ENCODE measurements at regions of chr18 and their contacts with region 1.

Region 1: GRCh38 chr18:4106407-4107033 is 348.6 kb downstream of the DLGAP1 start:
- DNase-seq: no peak
- ATAC-seq: peak; percentile 70
- H3K4me3 ChIP-seq: no peak overlapping the region
- H3K27ac ChIP-seq: no peak overlapping the region
- H3K4me1 ChIP-seq: no peaks in the 10 kb centered on the region
- H3K27me3 ChIP-seq: no peaks in the 10 kb centered on the region
- CTCF ChIP-seq: peak; percentile 53 to 79 (median 73); a peak in 5 of 6 replicates
- EP300 ChIP-seq: no peak
- POLR2A ChIP-seq: no peak
- RAD21 ChIP-seq: peak; percentile 69

Region 2: GRCh38 chr18:4024702-4025101 is 81.8 kb before region 1 on chr18:
- CTCF ChIA-PET with region 1: no interaction called
- POLR2A ChIA-PET with region 1: no interaction called
- RAD21 ChIA-PET with region 1: no interaction called
- SMC1A ChIA-PET with region 1: no interaction called
- in situ Hi-C with region 1: no loop called
- intact Hi-C with region 1: no loop called
- DNase-seq: no peak
- ATAC-seq: peak; percentile 36; the same call in 1 of the 3 replicates
- H3K4me3 ChIP-seq: no peak overlapping the region
- H3K27ac ChIP-seq: no peak overlapping the region
- H3K4me1 ChIP-seq: no peaks in the 10 kb centered on the region
- H3K27me3 ChIP-seq: no peaks in the 10 kb centered on the region
- CTCF ChIP-seq: no peak
- EP300 ChIP-seq: no peak
- POLR2A ChIP-seq: no peak
- RAD21 ChIP-seq: no peak

Region 3: GRCh38 chr18:4096486-4096885 is 10.0 kb before region 1 on chr18:
- CTCF ChIA-PET with region 1: interaction called, 16 read pairs
- POLR2A ChIA-PET with region 1: interaction called, 10 read pairs
- RAD21 ChIA-PET with region 1: interaction called, 3 read pairs
- SMC1A ChIA-PET with region 1: interaction called, 7 read pairs
- in situ Hi-C with region 1: no loop called
- intact Hi-C with region 1: no loop called
- DNase-seq: no peak
- ATAC-seq: no peak
- H3K4me3 ChIP-seq: no peak overlapping the region
- H3K27ac ChIP-seq: no peak overlapping the region
- H3K4me1 ChIP-seq: no peaks in the 10 kb centered on the region
- H3K27me3 ChIP-seq: no peaks in the 10 kb centered on the region
- CTCF ChIP-seq: no peak
- EP300 ChIP-seq: no peak
- POLR2A ChIP-seq: no peak
- RAD21 ChIP-seq: no peak

Region 4: GRCh38 chr18:4125232-4126230 is 19.0 kb after region 1 on chr18:
- CTCF ChIA-PET with region 1: interaction called, 45 read pairs
- POLR2A ChIA-PET with region 1: interaction called, 4 read pairs
- RAD21 ChIA-PET with region 1: interaction called, 15 read pairs
- SMC1A ChIA-PET with region 1: interaction called, 23 read pairs
- in situ Hi-C with region 1: no loop called
- intact Hi-C with region 1: no loop called
- DNase-seq: no peak
- ATAC-seq: peak; percentile 27
- H3K4me3 ChIP-seq: no peak overlapping the region
- H3K27ac ChIP-seq: no peak overlapping the region
- H3K4me1 ChIP-seq: no peaks in the 10 kb centered on the region
- H3K27me3 ChIP-seq: no peaks in the 10 kb centered on the region
- CTCF ChIP-seq: no peak
- EP300 ChIP-seq: no peak
- POLR2A ChIP-seq: no peak
- RAD21 ChIP-seq: no peak

Region 5: GRCh38 chr18:4236940-4237663 is 130.6 kb after region 1 on chr18:
- CTCF ChIA-PET with region 1: interaction called, 7 read pairs
- POLR2A ChIA-PET with region 1: interaction called, 3 read pairs
- RAD21 ChIA-PET with region 1: interaction called, 4 read pairs
- SMC1A ChIA-PET with region 1: interaction called, 31 read pairs
- in situ Hi-C with region 1: no loop called
- intact Hi-C with region 1: no loop called
- DNase-seq: no peak
- ATAC-seq: peak; percentile 77
- H3K4me3 ChIP-seq: no peak overlapping the region
- H3K27ac ChIP-seq: no peak overlapping the region
- H3K4me1 ChIP-seq: no peaks in the 10 kb centered on the region
- H3K27me3 ChIP-seq: no peaks in the 10 kb centered on the region
- CTCF ChIP-seq: no peak
- EP300 ChIP-seq: peak; percentile 28 to 41; a peak in 1 of 4 replicates
- POLR2A ChIP-seq: no peak
- RAD21 ChIP-seq: no peak

Region 6: GRCh38 chr18:4256766-4257417 is 150.4 kb after region 1 on chr18:
- CTCF ChIA-PET with region 1: interaction called, 10 read pairs
- POLR2A ChIA-PET with region 1: interaction called, 3 read pairs
- RAD21 ChIA-PET with region 1: interaction called, 18 read pairs
- SMC1A ChIA-PET with region 1: interaction called, 27 read pairs
- in situ Hi-C with region 1: no loop called
- intact Hi-C with region 1: no loop called
- DNase-seq: no peak
- ATAC-seq: peak; percentile 32
- H3K4me3 ChIP-seq: no peak overlapping the region
- H3K27ac ChIP-seq: peak overlapping the region; percentile 20; the same call in 1 of the 2 replicates
- H3K4me1 ChIP-seq: no peaks in the 10 kb centered on the region
- H3K27me3 ChIP-seq: no peaks in the 10 kb centered on the region
- CTCF ChIP-seq: no peak
- EP300 ChIP-seq: no peak
- POLR2A ChIP-seq: no peak
- RAD21 ChIP-seq: no peak

Region 7: GRCh38 chr18:4412286-4412685 is 305.8 kb after region 1 on chr18:
- CTCF ChIA-PET with region 1: no interaction called
- POLR2A ChIA-PET with region 1: no interaction called
- RAD21 ChIA-PET with region 1: no interaction called
- SMC1A ChIA-PET with region 1: no interaction called
- in situ Hi-C with region 1: no loop called
- intact Hi-C with region 1: no loop called
- DNase-seq: no peak
- ATAC-seq: peak; percentile 21
- H3K4me3 ChIP-seq: no peak overlapping the region
- H3K27ac ChIP-seq: no peak overlapping the region
- H3K4me1 ChIP-seq: no peaks in the 10 kb centered on the region
- H3K27me3 ChIP-seq: no peaks in the 10 kb centered on the region
- CTCF ChIP-seq: no peak
- EP300 ChIP-seq: no peak
- POLR2A ChIP-seq: no peak
- RAD21 ChIP-seq: no peak

Region 8: GRCh38 chr18:5021558-5021957 is 915.0 kb after region 1 on chr18:
- CTCF ChIA-PET with region 1: interaction called, 21 read pairs
- POLR2A ChIA-PET with region 1: no interaction called
- RAD21 ChIA-PET with region 1: interaction called, 3 read pairs
- SMC1A ChIA-PET with region 1: no interaction called
- in situ Hi-C with region 1: no loop called
- intact Hi-C with region 1: no loop called
- DNase-seq: no peak
- ATAC-seq: peak; percentile 83
- H3K4me3 ChIP-seq: no peak overlapping the region
- H3K27ac ChIP-seq: no peak overlapping the region
- H3K4me1 ChIP-seq: no peaks in the 10 kb centered on the region
- H3K27me3 ChIP-seq: no peaks in the 10 kb centered on the region
- CTCF ChIP-seq: no peak
- EP300 ChIP-seq: no peak
- POLR2A ChIP-seq: no peak
- RAD21 ChIP-seq: no peak

Measured in GM12878 (cell line).